CD8-positive, alpha-beta T cell (primary cell): ENCODE measurements at regions of chr3 and their contacts with region 1.

Region 1: GRCh38 chr3:153640689-153641301 is 478.8 kb downstream of the RAP2B start:
- DNase-seq: no peak
- ATAC-seq: no peak
- H3K4me3 ChIP-seq: no peak overlapping the region
- H3K4me3 Mint-ChIP-seq: no peak overlapping the region
- H3K27ac ChIP-seq: no peak overlapping the region
- H3K27ac Mint-ChIP-seq: no peak overlapping the region
- H3K4me1 ChIP-seq: peaks cover 19% of the 10 kb centered on the region
- H3K4me1 Mint-ChIP-seq: peaks cover 38% of the 10 kb centered on the region
- H3K27me3 ChIP-seq: no peaks in the 10 kb centered on the region
- H3K27me3 Mint-ChIP-seq: no peaks in the 10 kb centered on the region
- CTCF ChIP-seq: no peak

Region 2: GRCh38 chr3:153621953-153622352 is 18.8 kb before region 1 on chr3:
- CTCF ChIA-PET with region 1: no interaction called
- POLR2A ChIA-PET with region 1: interaction called, 3 read pairs
- intact Hi-C with region 1: loop called in 1 of 2 experiments (anchors 1 kb)
- DNase-seq: peak in 2 of 9 experiments; percentile 23 to 35
- ATAC-seq: peak; percentile 41
- H3K4me3 ChIP-seq: no peak overlapping the region
- H3K4me3 Mint-ChIP-seq: peak overlapping the region; percentile 12
- H3K27ac ChIP-seq: peak overlapping the region in 1 of 2 experiments; percentile 26
- H3K27ac Mint-ChIP-seq: peak overlapping the region; percentile 49
- H3K4me1 ChIP-seq: peaks cover 36% of the 10 kb centered on the region
- H3K4me1 Mint-ChIP-seq: peaks cover 44% of the 10 kb centered on the region
- H3K27me3 ChIP-seq: no peaks in the 10 kb centered on the region
- H3K27me3 Mint-ChIP-seq: no peaks in the 10 kb centered on the region
- CTCF ChIP-seq: no peak